OCI-LY7 (cell line): ENCODE measurements at regions of chr12 and their contacts with region 1.

Region 1: GRCh38 chr12:896031-896430 is 53.5 kb downstream of the RAD52 start:
- DNase-seq: no peak
- H3K4me3 ChIP-seq: no peak overlapping the region
- H3K27ac ChIP-seq: no peak overlapping the region
- H3K4me1 ChIP-seq: no peaks in the 10 kb centered on the region
- CTCF ChIP-seq: no peak

Region 2: DNA sequence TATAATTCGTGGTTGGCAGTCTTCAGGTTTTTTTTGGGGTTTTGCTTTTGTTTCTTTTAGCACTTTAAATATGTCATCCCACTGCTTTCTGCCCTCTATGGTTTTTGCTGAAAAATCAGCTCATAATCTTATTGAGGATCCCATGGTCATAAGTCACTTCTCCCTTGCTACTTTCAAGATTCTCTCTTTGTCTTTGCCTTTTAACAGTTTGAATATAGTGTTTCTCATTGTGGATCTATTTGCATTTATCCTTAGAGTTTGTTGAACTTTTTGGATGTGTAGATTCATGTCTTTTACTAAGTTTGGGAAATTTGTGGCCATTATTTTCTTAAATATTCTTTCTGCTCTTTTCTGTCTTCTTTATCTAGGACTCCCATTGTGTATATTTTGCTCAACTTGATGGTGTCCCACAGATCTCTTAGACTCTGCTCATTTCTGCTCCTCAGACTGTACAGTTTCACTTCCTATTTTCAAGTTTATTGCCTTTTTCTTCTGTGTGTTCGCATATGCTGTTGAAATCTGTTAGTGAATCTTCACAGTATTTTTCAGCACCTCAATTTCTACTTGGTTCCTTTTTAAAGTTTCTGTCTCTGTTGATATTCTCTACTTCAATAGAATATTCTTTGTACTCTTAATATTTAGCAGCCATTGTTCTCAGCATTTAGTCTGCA is 72.9 kb before region 1 on chr12:
- CTCF ChIA-PET with region 1: no interaction called
- POLR2A ChIA-PET with region 1: no interaction called
- intact Hi-C with region 1: loop called (anchors 5 kb)
- DNase-seq: peak; percentile 84
- H3K4me3 ChIP-seq: peak overlapping the region; percentile 42
- H3K27ac ChIP-seq: peak overlapping the region; percentile 70
- H3K4me1 ChIP-seq: peaks cover 30% of the 10 kb centered on the region
- CTCF ChIP-seq: no peak

Region 3: DNA sequence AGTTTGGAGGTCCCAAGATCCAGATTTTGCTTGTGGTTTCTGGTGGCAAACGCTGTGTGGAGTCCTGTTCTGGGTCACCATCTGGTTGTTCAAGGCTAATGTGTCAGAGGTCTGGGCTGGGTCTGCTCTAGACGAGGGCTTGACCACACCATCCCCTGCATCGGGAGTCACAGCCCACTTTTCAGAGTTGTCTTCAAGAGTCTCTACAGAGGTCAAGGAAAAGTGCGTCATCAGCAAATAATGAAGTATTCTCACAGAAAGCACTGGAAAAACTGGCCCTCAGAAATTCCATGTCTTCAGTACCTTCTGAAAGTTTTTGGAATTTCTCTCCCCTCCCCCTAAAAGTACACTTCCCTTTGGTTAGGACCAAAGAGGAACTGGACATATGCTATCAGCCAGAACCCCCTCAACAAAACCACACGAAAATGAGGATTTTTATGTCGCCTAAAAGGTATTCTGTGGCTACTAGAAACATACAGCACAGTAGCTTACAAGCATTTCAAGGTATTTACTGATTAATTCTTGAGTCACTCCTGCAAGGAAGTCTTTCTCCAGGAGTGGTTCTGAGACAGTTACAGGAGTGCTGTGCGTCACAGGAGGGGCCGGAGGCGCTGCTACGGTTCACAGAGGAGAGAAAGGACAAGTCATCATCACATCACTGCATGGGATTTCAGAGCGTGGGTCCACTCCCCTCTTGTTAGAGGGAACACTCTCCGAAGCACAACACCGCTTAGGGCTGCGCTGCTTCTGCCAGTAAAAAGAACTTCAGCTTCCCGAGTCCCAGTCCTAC is 18.1 kb after region 1 on chr12:
- CTCF ChIA-PET with region 1: no interaction called
- POLR2A ChIA-PET with region 1: no interaction called
- intact Hi-C with region 1: no loop called
- DNase-seq: no peak
- H3K4me3 ChIP-seq: no peak overlapping the region
- H3K27ac ChIP-seq: no peak overlapping the region
- H3K4me1 ChIP-seq: peaks cover 8% of the 10 kb centered on the region
- CTCF ChIP-seq: no peak